ENCODE measurements at regions of chr10 and their contacts with region 1.

Region 1: GRCh38 chr10:79463578-79464496 is 18.4 kb upstream of the ZCCHC24 start:
- DNase-seq: peak; percentile 45 to 86
- H3K4me3 ChIP-seq: no peak overlapping the region
- H3K27ac ChIP-seq: peak overlapping the region in 1 of 2 donors; percentile 19
- H3K4me1 ChIP-seq: peaks cover 0 to 20% (median 10%) of the 10 kb centered on the region in 4 donors
- H3K27me3 ChIP-seq: no peaks in the 10 kb centered on the region
- CTCF ChIP-seq: no peak

Region 2: GRCh38 chr10:79310200-79310865 is 153.5 kb before region 1 on chr10:
- intact Hi-C with region 1: no loop called
- DNase-seq: no peak
- H3K4me3 ChIP-seq: no peak overlapping the region
- H3K27ac ChIP-seq: no peak overlapping the region
- H3K4me1 ChIP-seq: no peaks in the 10 kb centered on the region
- H3K27me3 ChIP-seq: no peaks in the 10 kb centered on the region
- CTCF ChIP-seq: no peak

Region 3: DNA sequence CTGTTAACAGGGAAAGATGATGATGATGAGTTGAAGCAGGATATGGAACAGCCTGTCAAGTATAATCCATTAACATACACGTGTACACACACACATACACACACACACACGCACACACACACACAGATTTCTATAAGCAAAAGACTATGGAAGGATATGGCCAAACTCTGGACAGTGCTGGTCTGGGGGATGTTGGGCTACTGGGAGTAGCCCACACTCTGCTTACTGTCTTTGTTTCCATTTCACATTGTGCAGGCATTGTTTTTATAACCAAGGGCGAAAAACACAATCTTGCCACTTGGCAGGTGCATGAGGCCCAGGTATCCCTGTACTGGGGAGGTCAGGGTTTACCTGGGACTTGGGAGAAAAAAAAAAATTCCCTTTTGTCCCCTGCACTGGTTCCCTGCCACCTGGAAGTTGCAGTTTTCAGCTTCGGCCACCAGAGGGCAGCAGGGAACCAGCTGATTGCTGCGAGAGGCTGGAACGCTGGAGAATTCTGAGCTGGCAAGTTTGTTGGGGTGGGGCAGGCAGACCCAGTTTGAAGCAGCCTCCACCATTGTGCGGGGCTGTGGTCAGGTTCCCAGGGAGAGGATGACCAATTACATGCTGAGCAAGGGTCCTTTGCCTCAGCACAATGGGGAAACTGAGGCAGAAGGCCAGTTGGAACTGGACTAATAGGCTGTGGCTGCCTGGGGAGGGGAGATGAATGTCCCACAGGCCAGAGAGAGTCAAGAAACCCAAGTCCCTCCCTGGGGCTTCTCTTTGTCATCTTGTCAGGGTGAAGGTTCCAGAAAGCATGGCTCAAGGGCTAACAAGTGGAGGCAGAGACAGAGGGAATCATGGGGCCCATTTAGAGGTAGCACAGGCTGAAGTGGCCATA is 89.3 kb before region 1 on chr10:
- intact Hi-C with region 1: loop called (anchors 1 kb)
- DNase-seq: peak; percentile 77 to 88
- H3K4me3 ChIP-seq: no peak overlapping the region
- H3K27ac ChIP-seq: no peak overlapping the region
- H3K4me1 ChIP-seq: peaks cover 0 to 14% (median 11%) of the 10 kb centered on the region in 4 donors
- H3K27me3 ChIP-seq: no peaks in the 10 kb centered on the region
- CTCF ChIP-seq: peak; percentile 96 to 98

Region 4: GRCh38 chr10:79381804-79382221 is 82.0 kb before region 1 on chr10:
- intact Hi-C with region 1: loop called (anchors 1 kb)
- DNase-seq: peak; percentile 76 to 89
- H3K4me3 ChIP-seq: no peak overlapping the region
- H3K27ac ChIP-seq: peak overlapping the region; percentile 66 to 71
- H3K4me1 ChIP-seq: peaks cover 5 to 44% (median 38%) of the 10 kb centered on the region in 4 donors
- H3K27me3 ChIP-seq: no peaks in the 10 kb centered on the region
- CTCF ChIP-seq: no peak